ENCODE measurements at regions of chr5 and their contacts with region 1.

Region 1: GRCh38 chr5:44797841-44798240 is 10.9 kb upstream of the MRPS30 start:
- DNase-seq: no peak
- H3K4me3 ChIP-seq: no peak overlapping the region
- H3K27ac ChIP-seq: no peak overlapping the region
- H3K4me1 ChIP-seq: no peaks in the 10 kb centered on the region
- CTCF ChIP-seq: no peak

Region 2: GRCh38 chr5:44808435-44809214 is 10.8 kb after region 1 on chr5 and contains the start of gene MRPS30:
- CTCF ChIA-PET with region 1: no interaction called
- POLR2A ChIA-PET with region 1: no interaction called
- intact Hi-C with region 1: no loop called
- DNase-seq: peak; percentile 98
- H3K4me3 ChIP-seq: peak within 1 kb of the TSS; percentile 91
- H3K27ac ChIP-seq: peak within 1 kb of the TSS; percentile 75
- H3K4me1 ChIP-seq: peaks cover 25% of the 10 kb centered on the region
- CTCF ChIP-seq: peak; percentile 78
- total RNA-seq, gene MRPS30: 61.5 and 85.8 TPM in 2 replicates

Region 3: GRCh38 chr5:44843412-44843811 is 45.6 kb after region 1 on chr5:
- CTCF ChIA-PET with region 1: no interaction called
- POLR2A ChIA-PET with region 1: no interaction called
- intact Hi-C with region 1: no loop called
- DNase-seq: no peak
- H3K4me3 ChIP-seq: no peak overlapping the region
- H3K27ac ChIP-seq: no peak overlapping the region
- H3K4me1 ChIP-seq: no peaks in the 10 kb centered on the region
- CTCF ChIP-seq: no peak

Region 4: GRCh38 chr5:44900273-44900954 is 102.6 kb after region 1 on chr5:
- CTCF ChIA-PET with region 1: no interaction called
- POLR2A ChIA-PET with region 1: interaction called, 13 read pairs
- intact Hi-C with region 1: no loop called
- DNase-seq: no peak
- H3K4me3 ChIP-seq: no peak overlapping the region
- H3K27ac ChIP-seq: no peak overlapping the region
- H3K4me1 ChIP-seq: no peaks in the 10 kb centered on the region
- CTCF ChIP-seq: no peak

Measured in OCI-LY7 (cell line).